ENCODE measurements at regions of chr17 and their contacts with region 1.

Region 1: GRCh38 chr17:14866266-14866665 is 398.9 kb downstream of the PMP22 start:
- DNase-seq: no peak
- ATAC-seq: no peak
- H3K4me3 ChIP-seq: no peak overlapping the region
- H3K27ac ChIP-seq: no peak overlapping the region
- H3K4me1 ChIP-seq: no peaks in the 10 kb centered on the region
- H3K27me3 ChIP-seq: no peaks in the 10 kb centered on the region

Region 2: DNA sequence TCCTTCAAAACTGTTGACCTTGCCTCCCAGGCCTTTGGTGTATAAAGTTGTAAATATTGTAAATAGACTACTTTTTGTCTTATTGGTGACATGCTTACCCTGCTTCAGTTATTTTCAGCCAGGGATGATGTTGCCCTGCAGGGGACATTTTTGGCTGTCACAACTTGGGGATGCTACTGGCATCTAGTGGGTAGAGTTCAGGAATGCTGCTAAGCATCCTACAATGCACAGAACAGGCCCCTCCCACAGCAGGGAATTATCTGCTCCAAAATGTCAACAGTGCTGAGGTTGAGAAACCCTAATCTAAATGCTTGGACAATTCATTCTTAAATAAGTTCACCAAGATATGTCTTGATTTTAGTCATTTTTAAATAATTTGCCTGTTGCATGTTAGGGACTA is 60.9 kb before region 1 on chr17:
- intact Hi-C with region 1: loop called in 1 of 2 experiments (anchors 10 kb)
- DNase-seq: no peak
- ATAC-seq: no peak
- H3K4me3 ChIP-seq: no peak overlapping the region
- H3K27ac ChIP-seq: no peak overlapping the region
- H3K4me1 ChIP-seq: no peaks in the 10 kb centered on the region
- H3K27me3 ChIP-seq: no peaks in the 10 kb centered on the region

Measured in aorta (tissue), 5 donors.